ENCODE measurements at regions of chrX and their contacts with region 1.

Region 1: DNA sequence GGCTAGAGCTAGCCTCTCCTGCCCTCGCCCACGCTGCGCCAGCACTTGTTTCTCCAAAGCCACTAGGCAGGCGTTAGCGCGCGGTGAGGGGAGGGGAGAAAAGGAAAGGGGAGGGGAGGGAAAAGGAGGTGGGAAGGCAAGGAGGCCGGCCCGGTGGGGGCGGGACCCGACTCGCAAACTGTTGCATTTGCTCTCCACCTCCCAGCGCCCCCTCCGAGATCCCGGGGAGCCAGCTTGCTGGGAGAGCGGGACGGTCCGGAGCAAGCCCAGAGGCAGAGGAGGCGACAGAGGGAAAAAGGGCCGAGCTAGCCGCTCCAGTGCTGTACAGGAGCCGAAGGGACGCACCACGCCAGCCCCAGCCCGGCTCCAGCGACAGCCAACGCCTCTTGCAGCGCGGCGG is at the start of gene AR:
- DNase-seq: peak; percentile 72
- H3K4me3 ChIP-seq: peak within 1 kb of the TSS; percentile 26 to 72 (median 61)
- H3K27ac ChIP-seq: no peak within 1 kb of the TSS
- H3K4me1 ChIP-seq: peaks cover 13% of the 10 kb centered on the region
- H3K27me3 ChIP-seq: no peaks in the 10 kb centered on the region
- CTCF ChIP-seq: no peak
- POLR2A ChIP-seq: no peak
- total RNA-seq, gene AR: 10.9 and 16.0 TPM in 2 replicates

Region 2: GRCh38 chrX:67587946-67588624 is 44.3 kb after region 1 on chrX:
- CTCF ChIA-PET with region 1: no interaction called
- POLR2A ChIA-PET with region 1: no interaction called
- dilution Hi-C with region 1: no loop called
- intact Hi-C with region 1: no loop called
- DNase-seq: no peak
- H3K4me3 ChIP-seq: no peak overlapping the region
- H3K27ac ChIP-seq: no peak overlapping the region
- H3K4me1 ChIP-seq: peaks cover 14% of the 10 kb centered on the region
- H3K27me3 ChIP-seq: no peaks in the 10 kb centered on the region
- CTCF ChIP-seq: no peak
- POLR2A ChIP-seq: no peak

Region 3: DNA sequence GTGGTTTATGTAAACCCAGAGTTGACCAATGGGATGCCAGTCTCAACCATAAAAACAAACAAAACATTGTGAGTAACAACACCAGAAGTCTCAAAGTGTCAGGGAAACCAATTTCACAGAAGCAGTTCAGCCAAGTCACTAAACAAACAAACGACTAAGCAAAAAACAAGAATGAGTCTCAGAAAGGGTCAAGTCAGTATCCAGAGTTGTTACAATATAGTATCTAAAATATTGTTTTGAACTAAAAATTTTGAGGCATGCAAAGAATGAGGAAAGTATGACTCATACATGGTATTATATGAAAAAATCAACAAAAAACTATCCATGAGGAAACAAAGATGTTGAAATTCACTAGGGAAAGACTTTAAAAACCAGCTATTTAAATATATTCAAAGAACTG is 70.6 kb after region 1 on chrX:
- CTCF ChIA-PET with region 1: no interaction called
- POLR2A ChIA-PET with region 1: no interaction called
- dilution Hi-C with region 1: no loop called
- intact Hi-C with region 1: loop called (anchors 2 kb)
- DNase-seq: no peak
- H3K4me3 ChIP-seq: no peak overlapping the region
- H3K27ac ChIP-seq: peak overlapping the region; percentile 94
- H3K4me1 ChIP-seq: peaks cover 45% of the 10 kb centered on the region
- H3K27me3 ChIP-seq: no peaks in the 10 kb centered on the region
- CTCF ChIP-seq: no peak
- POLR2A ChIP-seq: no peak

Region 4: DNA sequence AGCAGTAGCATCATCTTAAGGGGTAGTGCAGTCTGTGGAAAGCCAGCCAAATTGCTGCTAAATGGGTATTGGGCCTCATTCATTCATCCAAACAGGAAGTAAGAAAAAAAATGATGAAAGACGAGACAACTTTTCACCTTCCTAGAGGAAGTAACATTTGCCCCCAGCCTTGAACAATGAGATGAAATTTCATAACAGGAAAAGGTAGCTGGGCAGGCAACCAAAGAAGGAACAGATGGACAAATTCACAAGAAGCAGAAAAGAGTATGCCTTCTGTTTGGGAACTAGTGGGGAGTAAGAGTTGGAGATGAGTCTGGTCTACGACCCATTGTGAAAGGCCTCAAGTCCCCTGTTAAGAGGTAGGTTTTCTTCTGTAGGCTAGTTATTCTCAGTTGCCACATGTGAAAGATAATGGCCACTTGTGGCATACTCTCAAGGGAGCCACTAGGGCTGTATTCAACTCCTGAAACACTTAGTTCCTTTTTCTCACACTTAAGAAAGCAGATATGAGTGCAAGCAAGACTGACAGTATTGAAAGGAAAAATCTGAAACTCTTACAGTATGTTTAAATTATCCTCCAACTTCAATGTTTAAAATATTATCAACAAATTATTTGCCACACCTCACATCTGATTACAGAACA is 190.4 kb after region 1 on chrX:
- CTCF ChIA-PET with region 1: no interaction called
- POLR2A ChIA-PET with region 1: no interaction called
- dilution Hi-C with region 1: no loop called
- intact Hi-C with region 1: loop called (anchors 5 kb)
- DNase-seq: peak; percentile 80
- H3K4me3 ChIP-seq: no peak overlapping the region
- H3K27ac ChIP-seq: no peak overlapping the region
- H3K4me1 ChIP-seq: peaks cover 13% of the 10 kb centered on the region
- H3K27me3 ChIP-seq: no peaks in the 10 kb centered on the region
- CTCF ChIP-seq: no peak
- POLR2A ChIP-seq: no peak

Region 5: GRCh38 chrX:68018681-68019111 is 474.9 kb after region 1 on chrX:
- CTCF ChIA-PET with region 1: interaction called, 8 read pairs
- POLR2A ChIA-PET with region 1: no interaction called
- dilution Hi-C with region 1: no loop called
- intact Hi-C with region 1: loop called (anchors 10 kb)
- DNase-seq: peak; percentile 29
- H3K4me3 ChIP-seq: no peak overlapping the region
- H3K27ac ChIP-seq: no peak overlapping the region
- H3K4me1 ChIP-seq: no peaks in the 10 kb centered on the region
- H3K27me3 ChIP-seq: no peaks in the 10 kb centered on the region
- CTCF ChIP-seq: peak; percentile 49 to 50
- POLR2A ChIP-seq: no peak